Cardiac septum (tissue), 1 donor: ENCODE measurements at regions of chr19 and their contacts with region 1.

Region 1: GRCh38 chr19:18419195-18419698 is at the start of gene SSBP4:
- DNase-seq: no peak
- total RNA-seq, gene SSBP4: 47.4 TPM

Region 2: GRCh38 chr19:18379803-18380747 is 39.2 kb before region 1 on chr19:
- intact Hi-C with region 1: loop called (anchors 5 kb)
- DNase-seq: peak; percentile 90

Region 3: DNA sequence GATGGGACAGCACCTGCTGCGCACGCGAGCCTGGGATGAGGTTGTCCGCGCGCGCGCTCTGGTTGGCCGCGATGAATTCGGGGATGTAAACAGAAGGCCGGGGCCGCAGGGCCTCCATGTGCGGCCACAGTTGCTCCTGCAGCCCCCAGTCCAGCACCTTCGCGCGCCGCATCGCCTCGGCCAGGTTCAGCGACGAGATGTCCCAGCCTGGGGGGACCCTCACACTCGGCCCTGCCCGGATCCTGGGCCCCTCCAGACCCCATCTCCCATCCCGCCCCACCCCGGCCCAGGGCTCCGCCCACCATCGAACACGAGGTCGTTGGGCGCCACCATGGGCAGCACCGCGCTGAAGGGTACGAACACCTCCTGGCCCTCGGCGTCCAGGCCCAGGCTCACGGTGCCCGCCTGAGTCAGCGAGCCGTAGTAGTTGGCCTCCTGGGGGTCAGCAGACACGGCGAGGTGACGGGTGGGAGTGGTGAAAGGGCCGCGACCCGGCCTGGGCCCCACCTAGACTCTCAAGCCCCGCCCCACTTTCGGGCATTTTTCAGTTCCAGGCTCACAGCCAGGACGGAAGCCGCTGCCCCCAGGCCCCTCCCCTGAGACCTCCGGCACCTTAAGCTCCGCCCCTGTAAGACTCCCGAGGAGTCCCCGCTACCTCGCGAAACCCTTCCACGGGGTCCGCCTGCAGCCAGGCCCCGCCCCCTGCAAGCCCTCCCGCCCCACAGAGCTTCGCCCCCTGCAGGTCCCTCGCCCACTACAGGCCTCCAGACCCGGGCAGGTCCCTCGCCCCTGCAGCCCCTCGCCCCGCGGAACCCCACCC is 17.6 kb after region 1 on chr19:
- intact Hi-C with region 1: no loop called
- DNase-seq: no peak